GM12878 (cell line): ENCODE measurements at regions of chr12 and their contacts with region 1.

Region 1: GRCh38 chr12:25386831-25387731 is 136.4 kb upstream of the KRAS start:
- DNase-seq: no peak
- ATAC-seq: peak; percentile 65
- H3K4me3 ChIP-seq: peak overlapping the region; percentile 99; the same call in 1 of the 2 replicates
- H3K27ac ChIP-seq: peak overlapping the region; percentile 95
- H3K4me1 ChIP-seq: peaks cover 21% of the 10 kb centered on the region
- H3K27me3 ChIP-seq: no peaks in the 10 kb centered on the region
- CTCF ChIP-seq: peak; percentile 76 to 92 (median 78)
- EP300 ChIP-seq: no peak
- POLR2A ChIP-seq: no peak
- RAD21 ChIP-seq: peak; percentile 96

Region 2: GRCh38 chr12:25151476-25151875 is 235.6 kb before region 1 on chr12:
- CTCF ChIA-PET with region 1: interaction called, 3 read pairs
- POLR2A ChIA-PET with region 1: no interaction called
- RAD21 ChIA-PET with region 1: no interaction called
- SMC1A ChIA-PET with region 1: no interaction called
- in situ Hi-C with region 1: no loop called
- intact Hi-C with region 1: loop called (anchors 1 kb)
- DNase-seq: no peak
- ATAC-seq: no peak
- H3K4me3 ChIP-seq: no peak overlapping the region
- H3K27ac ChIP-seq: no peak overlapping the region
- H3K4me1 ChIP-seq: peaks cover 17% of the 10 kb centered on the region
- H3K27me3 ChIP-seq: no peaks in the 10 kb centered on the region
- CTCF ChIP-seq: no peak
- EP300 ChIP-seq: no peak
- POLR2A ChIP-seq: no peak
- RAD21 ChIP-seq: no peak

Region 3: GRCh38 chr12:25208554-25208953 is 178.5 kb before region 1 on chr12:
- CTCF ChIA-PET with region 1: no interaction called
- POLR2A ChIA-PET with region 1: no interaction called
- RAD21 ChIA-PET with region 1: interaction called, 9 read pairs
- SMC1A ChIA-PET with region 1: interaction called, 5 read pairs
- in situ Hi-C with region 1: no loop called
- intact Hi-C with region 1: loop called (anchors 1 kb)
- DNase-seq: no peak
- ATAC-seq: no peak
- H3K4me3 ChIP-seq: no peak overlapping the region
- H3K27ac ChIP-seq: no peak overlapping the region
- H3K4me1 ChIP-seq: no peaks in the 10 kb centered on the region
- H3K27me3 ChIP-seq: no peaks in the 10 kb centered on the region
- CTCF ChIP-seq: no peak
- EP300 ChIP-seq: no peak
- POLR2A ChIP-seq: no peak
- RAD21 ChIP-seq: no peak

Region 4: DNA sequence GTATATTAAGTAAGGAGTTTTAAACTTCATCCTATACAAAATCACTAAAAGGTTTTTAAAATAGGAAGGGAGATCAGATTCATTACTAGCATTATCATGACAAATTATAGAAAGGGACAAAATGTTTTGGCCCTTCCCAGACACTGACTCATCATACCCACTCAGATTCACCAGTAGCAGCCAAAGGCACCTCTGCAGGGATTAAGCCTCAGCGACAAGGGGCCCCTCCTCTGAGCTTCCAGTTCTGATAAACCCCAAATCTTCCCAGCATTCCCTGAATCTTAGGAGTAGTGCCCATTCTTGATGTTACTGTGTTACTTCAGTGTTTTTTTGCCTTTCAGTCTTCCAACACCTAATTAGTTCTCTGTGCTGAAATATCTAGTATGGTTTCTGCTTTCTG is 150.9 kb before region 1 on chr12:
- CTCF ChIA-PET with region 1: interaction called, 5 read pairs
- POLR2A ChIA-PET with region 1: interaction called, 5 read pairs
- RAD21 ChIA-PET with region 1: interaction called, 13 read pairs
- SMC1A ChIA-PET with region 1: interaction called, 5 read pairs
- in situ Hi-C with region 1: no loop called
- intact Hi-C with region 1: loop called (anchors 1 kb)
- DNase-seq: no peak
- ATAC-seq: no peak
- H3K4me3 ChIP-seq: no peak overlapping the region
- H3K27ac ChIP-seq: no peak overlapping the region
- H3K4me1 ChIP-seq: no peaks in the 10 kb centered on the region
- H3K27me3 ChIP-seq: no peaks in the 10 kb centered on the region
- CTCF ChIP-seq: no peak
- EP300 ChIP-seq: no peak
- POLR2A ChIP-seq: no peak
- RAD21 ChIP-seq: no peak

Region 5: GRCh38 chr12:25241167-25242020 is 145.7 kb before region 1 on chr12:
- CTCF ChIA-PET with region 1: interaction called, 9 read pairs
- POLR2A ChIA-PET with region 1: interaction called, 5 read pairs
- RAD21 ChIA-PET with region 1: interaction called, 4 read pairs
- SMC1A ChIA-PET with region 1: interaction called, 7 read pairs
- in situ Hi-C with region 1: no loop called
- intact Hi-C with region 1: loop called (anchors 1 kb)
- DNase-seq: no peak
- ATAC-seq: peak; percentile 81
- H3K4me3 ChIP-seq: no peak overlapping the region
- H3K27ac ChIP-seq: no peak overlapping the region
- H3K4me1 ChIP-seq: no peaks in the 10 kb centered on the region
- H3K27me3 ChIP-seq: no peaks in the 10 kb centered on the region
- CTCF ChIP-seq: peak; percentile 55 to 63 (median 56); a peak in 5 of 6 replicates
- EP300 ChIP-seq: no peak
- POLR2A ChIP-seq: no peak
- RAD21 ChIP-seq: peak; percentile 69

Region 6: GRCh38 chr12:25250744-25251730 is 136.0 kb before region 1 on chr12 and contains the start of gene KRAS:
- CTCF ChIA-PET with region 1: interaction called, 9 read pairs
- POLR2A ChIA-PET with region 1: interaction called, 3 read pairs
- RAD21 ChIA-PET with region 1: interaction called, 6 read pairs
- SMC1A ChIA-PET with region 1: interaction called, 12 read pairs
- in situ Hi-C with region 1: no loop called
- intact Hi-C with region 1: no loop called
- DNase-seq: peak; percentile 69
- ATAC-seq: peak; percentile 92
- H3K4me3 ChIP-seq: peak within 1 kb of the TSS; percentile 98
- H3K27ac ChIP-seq: peak within 1 kb of the TSS; percentile 70
- H3K4me1 ChIP-seq: peaks cover 10% of the 10 kb centered on the region
- H3K27me3 ChIP-seq: no peaks in the 10 kb centered on the region
- CTCF ChIP-seq: no peak
- EP300 ChIP-seq: no peak
- POLR2A ChIP-seq: peak; percentile 84
- RAD21 ChIP-seq: no peak
- polyA plus RNA-seq, gene KRAS: 3.1 to 6.1 TPM

Region 7: DNA sequence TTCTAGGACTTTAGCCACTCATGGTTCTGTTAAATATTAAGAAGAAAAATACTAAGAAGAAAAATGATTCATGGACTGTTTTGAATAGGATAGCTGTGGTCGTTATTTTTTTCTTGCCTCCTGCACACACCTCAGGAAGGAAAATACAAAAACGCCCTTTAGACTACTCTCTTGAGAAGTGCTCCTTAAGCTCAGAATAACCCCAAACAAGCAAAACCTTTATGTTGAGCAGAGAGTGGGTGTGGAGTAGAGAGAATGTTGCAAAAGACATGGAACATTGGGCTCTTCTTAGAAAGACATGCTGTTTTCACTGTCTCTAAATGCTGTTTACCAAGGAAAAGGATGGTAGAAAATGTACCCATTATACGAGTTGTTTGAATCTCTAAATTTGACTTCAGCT is 25.7 kb after region 1 on chr12:
- CTCF ChIA-PET with region 1: no interaction called
- POLR2A ChIA-PET with region 1: no interaction called
- RAD21 ChIA-PET with region 1: no interaction called
- SMC1A ChIA-PET with region 1: no interaction called
- in situ Hi-C with region 1: no loop called
- intact Hi-C with region 1: no loop called
- DNase-seq: no peak
- ATAC-seq: no peak
- H3K4me3 ChIP-seq: no peak overlapping the region
- H3K27ac ChIP-seq: no peak overlapping the region
- H3K4me1 ChIP-seq: no peaks in the 10 kb centered on the region
- H3K27me3 ChIP-seq: no peaks in the 10 kb centered on the region
- CTCF ChIP-seq: no peak
- EP300 ChIP-seq: no peak
- POLR2A ChIP-seq: no peak
- RAD21 ChIP-seq: no peak